Gastrocnemius medialis (tissue), 4 donors: ENCODE measurements at regions of chr9 and their contacts with region 1.

Region 1: GRCh38 chr9:96646081-96646991 is 8.8 kb downstream of the PRXL2C start:
- DNase-seq: peak; percentile 72 to 92
- ATAC-seq: peak; percentile 89 to 90
- H3K4me3 ChIP-seq: peak overlapping the region; percentile 1 to 33 (median 13)
- H3K27ac ChIP-seq: peak overlapping the region; percentile 81 to 91 (median 86)
- H3K4me1 ChIP-seq: peaks cover 36 to 45% of the 10 kb centered on the region in 2 donors
- H3K27me3 ChIP-seq: no peaks in the 10 kb centered on the region
- CTCF ChIP-seq: no peak
- POLR2A ChIP-seq: no peak

Region 2: GRCh38 chr9:96126321-96126881 is 519.9 kb before region 1 on chr9:
- in situ Hi-C with region 1: no loop called
- intact Hi-C with region 1: no loop called
- DNase-seq: no peak
- ATAC-seq: no peak
- H3K4me3 ChIP-seq: no peak overlapping the region
- H3K27ac ChIP-seq: no peak overlapping the region
- H3K4me1 ChIP-seq: no peaks in the 10 kb centered on the region
- H3K27me3 ChIP-seq: no peaks in the 10 kb centered on the region
- CTCF ChIP-seq: no peak
- POLR2A ChIP-seq: no peak

Region 3: GRCh38 chr9:96604004-96604319 is 42.4 kb before region 1 on chr9:
- in situ Hi-C with region 1: loop called in 1 of 4 experiments (anchors 10 kb)
- intact Hi-C with region 1: loop called (anchors 1 kb)
- DNase-seq: peak; percentile 46 to 62
- ATAC-seq: peak; percentile 94 to 95
- H3K4me3 ChIP-seq: peak overlapping the region; percentile 10 to 37 (median 27)
- H3K27ac ChIP-seq: peak overlapping the region; percentile 73 to 84 (median 78)
- H3K4me1 ChIP-seq: peaks cover 7 to 13% of the 10 kb centered on the region in 2 donors
- H3K27me3 ChIP-seq: no peaks in the 10 kb centered on the region
- CTCF ChIP-seq: no peak
- POLR2A ChIP-seq: no peak

Region 4: GRCh38 chr9:96619491-96620154 is 26.7 kb before region 1 on chr9 and contains the start of gene CDC14B:
- in situ Hi-C with region 1: no loop called
- intact Hi-C with region 1: loop called (anchors 1 kb)
- DNase-seq: peak; percentile 57 to 74
- ATAC-seq: peak; percentile 58 to 70
- H3K4me3 ChIP-seq: peak within 1 kb of the TSS; percentile 60 to 71 (median 66)
- H3K27ac ChIP-seq: peak within 1 kb of the TSS; percentile 78 to 98 (median 89)
- H3K4me1 ChIP-seq: peaks cover 0 to 8% of the 10 kb centered on the region in 2 donors
- H3K27me3 ChIP-seq: no peaks in the 10 kb centered on the region
- CTCF ChIP-seq: peak in 2 of 5 experiments; percentile 9 to 14
- POLR2A ChIP-seq: peak in 1 of 2 donors; percentile 27
- total RNA-seq, gene CDC14B: 2.0 to 9.4 (median 5.5) TPM